HCT116 (cell line): ENCODE measurements at regions of chr1 and their contacts with region 1.

Region 1: GRCh38 chr1:208146650-208147049 is 97.5 kb downstream of the PLXNA2 start:
- DNase-seq: no peak
- ATAC-seq: no peak
- H3K4me3 ChIP-seq: no peak overlapping the region
- H3K27ac ChIP-seq: no peak overlapping the region
- H3K4me1 ChIP-seq: no peaks in the 10 kb centered on the region
- H3K27me3 ChIP-seq: no peaks in the 10 kb centered on the region; the same call in 1 of the 2 replicates
- CTCF ChIP-seq: no peak
- POLR2A ChIP-seq: no peak
- RAD21 ChIP-seq: no peak

Region 2: GRCh38 chr1:207654320-207654719 is 492.3 kb before region 1 on chr1:
- CTCF ChIA-PET with region 1: no interaction called
- POLR2A ChIA-PET with region 1: no interaction called
- RAD21 ChIA-PET with region 1: no interaction called
- intact Hi-C with region 1: no loop called
- DNase-seq: no peak
- ATAC-seq: peak; percentile 62
- H3K4me3 ChIP-seq: no peak overlapping the region
- H3K27ac ChIP-seq: no peak overlapping the region
- H3K4me1 ChIP-seq: no peaks in the 10 kb centered on the region
- H3K27me3 ChIP-seq: no peaks in the 10 kb centered on the region
- CTCF ChIP-seq: peak; percentile 13 to 27 (median 22); a peak in 1 of 6 replicates
- POLR2A ChIP-seq: no peak
- RAD21 ChIP-seq: peak; percentile 24; the same call in 1 of the 2 replicates

Region 3: DNA sequence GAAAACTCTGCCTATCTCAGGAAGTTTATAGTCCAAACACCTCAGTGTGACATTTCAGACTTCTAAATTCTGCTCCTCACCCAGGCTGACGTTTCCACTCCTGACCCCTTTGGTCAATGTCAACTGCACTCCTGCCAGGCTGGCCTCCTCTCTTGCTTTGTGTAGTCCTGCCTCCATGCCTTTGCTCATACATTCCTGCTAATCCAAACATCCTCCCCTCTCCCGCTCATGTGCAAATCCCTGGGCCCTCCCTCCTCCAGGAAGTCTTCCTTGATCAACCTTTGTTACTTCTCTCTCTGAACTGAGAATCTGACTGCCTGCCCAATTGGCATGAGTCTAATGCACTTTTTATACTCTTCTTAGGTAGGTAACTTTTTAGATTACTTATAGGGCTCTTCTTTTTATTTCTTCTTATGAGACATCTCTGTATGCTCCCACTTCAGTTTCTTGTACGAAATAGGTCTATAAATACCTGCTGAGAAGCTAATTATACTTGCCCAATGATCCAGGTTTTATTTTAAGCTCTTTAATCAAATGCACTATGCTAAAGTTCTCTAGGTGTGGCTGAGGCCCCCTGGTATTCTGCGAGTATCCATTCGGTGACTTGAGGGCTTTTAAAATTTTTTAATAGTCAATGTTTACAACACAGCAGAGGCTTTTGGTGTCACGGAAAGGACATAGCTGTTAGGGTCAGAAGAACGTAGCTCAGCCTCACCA is 30.6 kb before region 1 on chr1:
- CTCF ChIA-PET with region 1: no interaction called
- POLR2A ChIA-PET with region 1: no interaction called
- RAD21 ChIA-PET with region 1: no interaction called
- intact Hi-C with region 1: no loop called
- DNase-seq: no peak
- ATAC-seq: no peak
- H3K4me3 ChIP-seq: no peak overlapping the region
- H3K27ac ChIP-seq: no peak overlapping the region
- H3K4me1 ChIP-seq: no peaks in the 10 kb centered on the region
- H3K27me3 ChIP-seq: peaks cover 6% of the 10 kb centered on the region
- CTCF ChIP-seq: no peak
- POLR2A ChIP-seq: no peak
- RAD21 ChIP-seq: no peak

Region 4: DNA sequence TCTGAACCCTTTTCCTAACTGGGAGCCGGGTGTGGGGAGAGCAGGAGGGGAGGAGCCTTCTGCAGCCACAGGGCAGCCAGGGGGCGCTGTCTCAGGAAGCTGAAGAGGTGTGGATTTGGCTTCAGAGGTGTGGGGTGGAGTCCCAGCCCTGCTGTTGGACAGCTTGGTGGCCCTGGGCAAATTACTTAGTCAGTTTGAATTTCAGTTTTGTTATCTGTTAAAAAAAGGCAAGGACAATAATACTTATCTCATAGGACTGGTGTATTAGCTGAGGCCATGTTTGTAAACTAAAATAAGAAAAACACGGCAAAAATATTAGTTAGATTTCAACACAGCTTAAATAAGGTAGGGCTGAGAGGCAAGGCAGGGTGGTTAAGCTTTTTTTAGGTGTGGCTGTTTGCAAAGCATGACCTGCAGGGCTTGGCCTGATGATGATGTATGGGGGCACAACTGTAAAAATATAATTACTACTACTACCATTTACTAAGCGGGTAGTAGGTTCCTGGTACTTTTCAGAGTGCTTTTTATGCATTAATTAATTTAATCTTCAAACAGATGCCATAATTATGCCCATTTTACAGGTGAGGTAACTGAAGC is 14.3 kb before region 1 on chr1:
- CTCF ChIA-PET with region 1: interaction called, 12 read pairs
- POLR2A ChIA-PET with region 1: no interaction called
- RAD21 ChIA-PET with region 1: no interaction called
- intact Hi-C with region 1: no loop called
- DNase-seq: peak; percentile 56
- ATAC-seq: peak; percentile 100
- H3K4me3 ChIP-seq: no peak overlapping the region
- H3K27ac ChIP-seq: no peak overlapping the region
- H3K4me1 ChIP-seq: peaks cover 3 to 11% of the 10 kb centered on the region in 2 experiments; a peak in 3 of 4 replicates
- H3K27me3 ChIP-seq: no peaks in the 10 kb centered on the region
- CTCF ChIP-seq: peak; percentile 77 to 98 (median 96)
- POLR2A ChIP-seq: no peak
- RAD21 ChIP-seq: peak; percentile 66